ENCODE measurements at regions of chr5 and their contacts with region 1.

Region 1: GRCh38 chr5:173530547-173530946 is 85.9 kb downstream of the BOD1 start:
- DNase-seq: peak; percentile 58 to 65
- H3K4me3 ChIP-seq: no peak overlapping the region
- H3K4me3 Mint-ChIP-seq: no peak overlapping the region
- H3K27ac Mint-ChIP-seq: peak overlapping the region; percentile 23
- H3K4me1 ChIP-seq: peaks cover 19% of the 10 kb centered on the region
- H3K4me1 Mint-ChIP-seq: peaks cover 17% of the 10 kb centered on the region
- H3K27me3 ChIP-seq: no peaks in the 10 kb centered on the region
- H3K27me3 Mint-ChIP-seq: no peaks in the 10 kb centered on the region
- CTCF ChIP-seq: peak in 1 of 2 experiments; percentile 48

Region 2: GRCh38 chr5:173573126-173573960 is 42.8 kb after region 1 on chr5:
- CTCF ChIA-PET with region 1: interaction called, 5 read pairs
- POLR2A ChIA-PET with region 1: no interaction called
- intact Hi-C with region 1: loop called (anchors 1 kb)
- DNase-seq: peak; percentile 70 to 85
- H3K4me3 ChIP-seq: peak overlapping the region; percentile 17; the same call in 1 of the 2 replicates
- H3K4me3 Mint-ChIP-seq: peak overlapping the region; percentile 44
- H3K27ac Mint-ChIP-seq: peak overlapping the region; percentile 51
- H3K4me1 ChIP-seq: peaks cover 3% of the 10 kb centered on the region; the same call in 1 of the 2 replicates
- H3K4me1 Mint-ChIP-seq: peaks cover 11% of the 10 kb centered on the region
- H3K27me3 ChIP-seq: no peaks in the 10 kb centered on the region
- H3K27me3 Mint-ChIP-seq: no peaks in the 10 kb centered on the region
- CTCF ChIP-seq: peak; percentile 91 to 97